Naive thymus-derived CD4-positive, alpha-beta T cell (primary cell): ENCODE measurements at regions of chr1 and their contacts with region 1.

Region 1: GRCh38 chr1:202968840-202969295 is 1.8 kb upstream of the CYB5R1 start:
- DNase-seq: peak in 7 of 9 donors; percentile 24 to 64 (median 47)
- ATAC-seq: peak; percentile 73
- H3K4me3 ChIP-seq: no peak overlapping the region
- H3K4me3 Mint-ChIP-seq: peak overlapping the region in 9 of 10 donors; percentile 40 to 98 (median 94)
- H3K27ac ChIP-seq: peak overlapping the region; percentile 83
- H3K27ac Mint-ChIP-seq: peak overlapping the region in 8 of 9 donors; percentile 80 to 96 (median 94)
- H3K4me1 ChIP-seq: peaks cover 14 to 20% of the 10 kb centered on the region in 2 donors
- H3K4me1 Mint-ChIP-seq: peaks cover 15 to 34% (median 27%) of the 10 kb centered on the region in 7 donors
- H3K27me3 ChIP-seq: no peaks in the 10 kb centered on the region
- H3K27me3 Mint-ChIP-seq: peaks cover 0 to 15% (median 0%) of the 10 kb centered on the region in 5 donors

Region 2: DNA sequence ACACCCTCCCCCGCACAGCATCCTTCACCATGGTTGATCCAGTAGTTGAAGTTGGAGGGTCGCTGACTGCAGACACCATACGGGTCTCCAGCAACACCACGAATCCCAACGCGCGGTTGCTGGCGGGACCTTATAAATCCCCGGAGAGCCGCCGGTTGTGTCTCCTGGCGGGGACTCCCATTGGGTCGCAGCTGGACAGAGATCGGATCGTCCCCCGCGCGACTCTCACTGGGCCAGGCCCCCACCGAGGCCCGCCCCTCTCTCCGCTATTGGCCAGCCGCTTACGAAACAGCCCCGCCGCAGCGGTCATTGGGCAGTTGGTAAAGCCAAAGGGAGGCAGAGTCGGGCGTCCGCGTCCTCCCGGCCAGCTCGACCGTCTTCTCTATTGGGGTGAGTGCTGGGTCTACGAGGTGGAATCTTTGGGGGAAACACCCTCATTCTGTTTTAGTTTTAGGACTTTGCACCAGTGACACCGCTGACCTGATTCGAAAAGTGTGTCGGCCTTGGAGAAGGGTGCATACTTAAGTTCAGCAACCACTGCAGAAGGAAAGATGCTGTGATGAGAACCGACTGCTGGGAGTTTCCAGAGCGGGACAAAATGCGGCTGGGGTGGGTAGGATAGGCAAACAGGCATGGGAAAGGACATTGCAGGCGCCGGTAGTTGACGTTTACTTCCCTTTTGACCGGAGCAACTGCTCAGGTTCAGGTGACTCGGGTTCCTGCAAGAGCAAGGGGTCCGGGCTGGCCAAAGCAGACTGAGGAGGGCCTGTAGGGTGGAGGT is 107.3 kb before region 1 on chr1:
- CTCF ChIA-PET with region 1: no interaction called
- POLR2A ChIA-PET with region 1: no interaction called
- intact Hi-C with region 1: no loop called
- DNase-seq: peak in 3 of 9 donors; percentile 10 to 62 (median 39)
- ATAC-seq: peak; percentile 93
- H3K4me3 ChIP-seq: peak overlapping the region; percentile 53
- H3K4me3 Mint-ChIP-seq: peak overlapping the region; percentile 73 to 90 (median 84)
- H3K27ac ChIP-seq: no peak overlapping the region
- H3K27ac Mint-ChIP-seq: peak overlapping the region in 2 of 9 donors; percentile 15 to 59
- H3K4me1 ChIP-seq: peaks cover 0 to 8% of the 10 kb centered on the region in 2 donors
- H3K4me1 Mint-ChIP-seq: peaks cover 8 to 17% (median 12%) of the 10 kb centered on the region in 7 donors
- H3K27me3 ChIP-seq: peaks cover 0 to 16% of the 10 kb centered on the region in 2 donors
- H3K27me3 Mint-ChIP-seq: peaks cover 32 to 76% (median 61%) of the 10 kb centered on the region in 5 donors

Region 3: GRCh38 chr1:202926720-202927491 is 42.0 kb before region 1 on chr1 and contains the start of gene KLHL12:
- CTCF ChIA-PET with region 1: no interaction called
- POLR2A ChIA-PET with region 1: interaction called, 5 read pairs
- intact Hi-C with region 1: loop called (anchors 1 kb)
- DNase-seq: peak; percentile 88 to 95 (median 94)
- ATAC-seq: peak; percentile 97
- H3K4me3 ChIP-seq: peak within 1 kb of the TSS; percentile 97
- H3K4me3 Mint-ChIP-seq: peak within 1 kb of the TSS; percentile 90 to 96 (median 94)
- H3K27ac ChIP-seq: peak within 1 kb of the TSS; percentile 97
- H3K27ac Mint-ChIP-seq: peak within 1 kb of the TSS; percentile 92 to 97 (median 94)
- H3K4me1 ChIP-seq: peaks cover 19 to 26% of the 10 kb centered on the region in 2 donors
- H3K4me1 Mint-ChIP-seq: peaks cover 17 to 40% (median 34%) of the 10 kb centered on the region in 7 donors
- H3K27me3 ChIP-seq: no peaks in the 10 kb centered on the region
- H3K27me3 Mint-ChIP-seq: peaks cover 0 to 11% (median 0%) of the 10 kb centered on the region in 5 donors
- total RNA-seq, gene KLHL12: 15.6 to 28.0 (median 24.5) TPM

Region 4: GRCh38 chr1:202938287-202938925 is 30.5 kb before region 1 on chr1:
- CTCF ChIA-PET with region 1: no interaction called
- POLR2A ChIA-PET with region 1: no interaction called
- intact Hi-C with region 1: no loop called
- DNase-seq: no peak
- ATAC-seq: no peak
- H3K4me3 ChIP-seq: no peak overlapping the region
- H3K4me3 Mint-ChIP-seq: no peak overlapping the region
- H3K27ac ChIP-seq: no peak overlapping the region
- H3K27ac Mint-ChIP-seq: no peak overlapping the region
- H3K4me1 ChIP-seq: no peaks in the 10 kb centered on the region
- H3K4me1 Mint-ChIP-seq: no peaks in the 10 kb centered on the region
- H3K27me3 ChIP-seq: no peaks in the 10 kb centered on the region
- H3K27me3 Mint-ChIP-seq: peaks cover 5 to 20% (median 15%) of the 10 kb centered on the region in 5 donors

Region 5: DNA sequence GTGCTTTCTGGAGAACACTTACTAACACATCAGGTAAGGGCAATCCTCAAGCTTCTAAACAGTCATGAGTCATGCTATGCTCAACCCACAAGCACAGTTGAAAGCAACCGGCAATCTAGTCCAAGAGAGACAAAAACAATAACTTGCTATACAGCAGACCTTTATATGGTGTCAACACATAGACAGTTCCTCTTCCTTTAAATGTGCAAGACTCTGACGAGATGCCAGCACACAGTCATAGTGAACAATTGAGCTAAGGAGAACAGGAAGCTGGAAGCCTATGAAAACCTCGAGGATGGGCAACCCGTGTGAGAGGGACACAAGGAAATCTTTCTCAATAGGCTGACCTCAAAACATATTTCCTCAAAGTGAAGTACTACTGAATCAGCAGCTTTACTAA is 16.1 kb before region 1 on chr1:
- CTCF ChIA-PET with region 1: no interaction called
- POLR2A ChIA-PET with region 1: interaction called, 10 read pairs
- intact Hi-C with region 1: loop called (anchors 1 kb)
- DNase-seq: no peak
- ATAC-seq: peak; percentile 80
- H3K4me3 ChIP-seq: no peak overlapping the region
- H3K4me3 Mint-ChIP-seq: peak overlapping the region in 5 of 10 donors; percentile 22 to 48 (median 39)
- H3K27ac ChIP-seq: peak overlapping the region; percentile 30
- H3K27ac Mint-ChIP-seq: peak overlapping the region; percentile 16 to 84 (median 76)
- H3K4me1 ChIP-seq: peaks cover 14 to 37% of the 10 kb centered on the region in 2 donors
- H3K4me1 Mint-ChIP-seq: peaks cover 32 to 64% (median 60%) of the 10 kb centered on the region in 7 donors
- H3K27me3 ChIP-seq: no peaks in the 10 kb centered on the region
- H3K27me3 Mint-ChIP-seq: no peaks in the 10 kb centered on the region

Region 6: GRCh38 chr1:203006948-203007871 is 38.3 kb after region 1 on chr1 and contains the start of gene TMEM183A:
- CTCF ChIA-PET with region 1: interaction called, 3 read pairs
- POLR2A ChIA-PET with region 1: interaction called, 9 read pairs
- intact Hi-C with region 1: loop called (anchors 1 to 2 kb)
- DNase-seq: peak; percentile 77 to 95 (median 92)
- ATAC-seq: peak; percentile 96
- H3K4me3 ChIP-seq: peak within 1 kb of the TSS; percentile 91
- H3K4me3 Mint-ChIP-seq: peak within 1 kb of the TSS; percentile 91 to 100 (median 96)
- H3K27ac ChIP-seq: peak within 1 kb of the TSS; percentile 90
- H3K27ac Mint-ChIP-seq: peak within 1 kb of the TSS; percentile 93 to 99 (median 98)
- H3K4me1 ChIP-seq: peaks cover 10 to 14% of the 10 kb centered on the region in 2 donors
- H3K4me1 Mint-ChIP-seq: peaks cover 24 to 46% (median 36%) of the 10 kb centered on the region in 7 donors
- H3K27me3 ChIP-seq: no peaks in the 10 kb centered on the region
- H3K27me3 Mint-ChIP-seq: peaks cover 0 to 4% (median 0%) of the 10 kb centered on the region in 5 donors
- total RNA-seq, gene TMEM183A: 61.4 to 134 (median 77.0) TPM

Region 7: DNA sequence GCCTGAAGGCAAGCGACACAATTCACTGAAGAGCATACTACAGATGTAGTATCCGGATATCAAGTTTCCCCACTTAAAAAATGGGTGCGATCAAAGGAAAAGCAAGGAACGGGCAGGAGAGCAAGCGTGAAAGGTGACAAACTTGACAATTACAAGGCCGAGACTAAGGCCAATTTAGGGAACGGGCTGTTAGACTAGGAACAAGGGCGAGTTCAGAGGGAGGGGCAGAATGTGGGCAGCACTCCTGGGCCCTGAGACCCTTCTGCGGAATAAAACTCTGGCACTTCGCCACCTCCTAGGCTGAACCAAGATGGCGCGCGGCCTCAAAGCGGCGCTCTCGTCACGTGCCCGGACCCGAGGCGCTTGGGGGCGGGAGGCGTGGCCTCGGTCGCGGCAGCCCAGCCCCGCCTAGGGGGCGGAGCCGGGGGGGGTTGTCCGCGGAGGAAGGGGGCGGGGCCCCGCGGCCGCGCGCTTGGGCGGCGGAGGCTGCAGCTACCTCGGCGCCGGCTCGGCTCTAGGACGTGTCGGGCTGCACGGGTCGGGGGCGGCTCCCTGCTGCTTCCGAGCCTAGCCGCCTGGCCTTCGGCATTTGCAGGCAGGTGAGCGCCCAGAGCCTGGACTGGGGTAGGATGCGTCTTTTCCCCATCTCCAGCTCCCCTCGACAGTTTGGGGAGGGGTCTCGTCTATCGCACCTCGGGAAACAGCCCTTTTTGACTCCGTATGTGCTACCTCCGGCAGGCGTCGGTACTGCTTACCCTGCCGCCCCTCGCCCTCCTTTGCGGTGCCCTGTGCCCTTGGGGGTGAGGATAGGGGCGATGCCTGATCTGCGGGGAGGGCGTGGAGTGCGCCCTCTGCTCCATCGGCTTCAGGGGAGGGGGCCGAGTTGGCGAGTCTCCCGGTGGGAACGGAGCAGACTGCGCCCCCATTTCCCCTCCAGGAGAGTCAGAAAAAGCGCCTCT is 57.4 kb after region 1 on chr1 and contains the start of gene PPFIA4:
- CTCF ChIA-PET with region 1: no interaction called
- POLR2A ChIA-PET with region 1: interaction called, 3 read pairs
- intact Hi-C with region 1: loop called (anchors 2 to 5 kb)
- DNase-seq: peak; percentile 72 to 94 (median 89)
- ATAC-seq: peak; percentile 98
- H3K4me3 ChIP-seq: peak within 1 kb of the TSS; percentile 84
- H3K4me3 Mint-ChIP-seq: peak within 1 kb of the TSS; percentile 74 to 95 (median 84)
- H3K27ac ChIP-seq: peak within 1 kb of the TSS; percentile 53
- H3K27ac Mint-ChIP-seq: peak within 1 kb of the TSS; percentile 73 to 96 (median 85)
- H3K4me1 ChIP-seq: peaks cover 0 to 11% of the 10 kb centered on the region in 2 donors
- H3K4me1 Mint-ChIP-seq: peaks cover 0 to 24% (median 14%) of the 10 kb centered on the region in 7 donors
- H3K27me3 ChIP-seq: no peaks in the 10 kb centered on the region
- H3K27me3 Mint-ChIP-seq: peaks cover 0 to 9% (median 0%) of the 10 kb centered on the region in 5 donors
- total RNA-seq, gene PPFIA4: 0.40 to 45.5 (median 2.4) TPM